Left cardiac atrium (tissue), 4 donors: ENCODE measurements at regions of chr1 and their contacts with region 1.

Region 1: GRCh38 chr1:53945433-53946251 is at the start of gene IFT25:
- DNase-seq: peak; percentile 95
- ATAC-seq: peak; percentile 92 to 95
- total RNA-seq, gene IFT25: 15.1 to 16.6 TPM

Region 2: DNA sequence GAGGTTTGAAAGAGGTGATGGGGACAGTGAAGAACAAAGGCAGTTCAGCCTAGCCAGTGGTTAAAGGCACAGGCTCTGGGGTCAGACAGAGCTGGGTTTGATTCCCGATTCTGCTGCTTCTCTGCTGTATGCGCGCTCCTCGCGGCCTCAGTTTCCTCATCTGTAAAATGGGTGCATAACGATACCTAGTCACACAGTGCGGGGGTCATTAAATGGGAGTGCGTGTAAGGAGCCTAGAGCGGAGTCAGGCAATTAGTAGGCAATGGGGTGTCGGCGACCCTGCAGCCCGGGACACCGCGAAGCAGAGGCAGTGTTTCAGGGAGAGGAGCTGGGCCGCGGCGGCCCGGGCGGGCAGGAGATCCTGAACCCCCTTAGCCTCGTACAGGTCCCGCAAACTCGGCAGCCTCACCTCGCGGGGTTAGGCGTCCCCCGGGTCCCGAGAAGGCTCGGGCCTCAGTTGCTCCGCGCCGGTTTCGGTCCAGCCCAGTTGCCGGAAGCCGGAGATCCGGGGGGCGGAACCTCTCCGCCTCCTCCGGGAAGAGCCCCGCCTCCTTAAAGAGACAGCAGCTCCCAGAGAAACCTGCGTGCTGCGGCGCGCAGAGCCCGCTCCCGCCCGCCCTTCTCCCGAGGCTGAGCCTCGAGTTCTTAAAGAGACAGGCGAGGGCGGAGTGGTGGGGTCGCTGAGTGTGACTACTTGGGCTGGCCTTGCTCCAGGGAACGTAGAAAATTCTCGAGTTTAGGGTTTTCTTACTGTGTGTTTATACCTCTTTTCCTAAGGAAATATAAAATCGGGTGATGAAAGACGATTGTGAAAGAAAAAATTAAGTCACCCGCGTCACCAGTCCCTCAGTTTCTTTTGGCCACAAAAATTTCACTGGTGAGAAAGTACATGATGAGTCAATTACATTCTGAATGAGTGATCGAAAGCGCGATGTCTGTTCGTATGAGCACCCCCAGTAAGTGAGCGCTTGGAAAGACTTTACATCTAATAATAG is 56.0 kb before region 1 on chr1 and contains the start of gene YIPF1:
- intact Hi-C with region 1: loop called in 1 of 2 experiments (anchors 5 kb)
- DNase-seq: peak; percentile 92
- ATAC-seq: peak; percentile 99 to 100
- total RNA-seq, gene YIPF1: 12.9 to 15.2 TPM

Region 3: DNA sequence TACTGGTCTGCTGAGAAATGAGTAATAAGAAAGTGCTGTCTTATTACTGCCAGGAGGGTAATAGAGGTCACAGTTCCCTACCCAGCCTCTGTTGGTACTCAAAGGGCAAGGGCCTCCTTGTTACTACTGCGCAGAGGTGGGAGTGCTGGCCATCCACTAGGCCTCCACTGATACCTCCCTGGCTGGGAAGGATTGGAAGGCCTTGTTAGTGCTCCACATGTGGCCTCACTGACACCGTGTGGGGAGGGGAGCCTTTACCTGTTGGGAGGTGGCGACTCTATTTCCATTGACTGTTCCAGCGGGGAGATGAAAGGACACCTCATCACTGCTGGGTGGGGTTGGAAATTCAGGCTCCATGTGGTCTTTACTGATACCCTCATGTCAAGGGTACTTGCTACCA is 1327.4 kb after region 1 on chr1:
- intact Hi-C with region 1: no loop called
- DNase-seq: no peak
- ATAC-seq: no peak